CD8-positive, alpha-beta T cell (primary cell): ENCODE measurements at regions of chr21 and their contacts with region 1.

Region 1: DNA sequence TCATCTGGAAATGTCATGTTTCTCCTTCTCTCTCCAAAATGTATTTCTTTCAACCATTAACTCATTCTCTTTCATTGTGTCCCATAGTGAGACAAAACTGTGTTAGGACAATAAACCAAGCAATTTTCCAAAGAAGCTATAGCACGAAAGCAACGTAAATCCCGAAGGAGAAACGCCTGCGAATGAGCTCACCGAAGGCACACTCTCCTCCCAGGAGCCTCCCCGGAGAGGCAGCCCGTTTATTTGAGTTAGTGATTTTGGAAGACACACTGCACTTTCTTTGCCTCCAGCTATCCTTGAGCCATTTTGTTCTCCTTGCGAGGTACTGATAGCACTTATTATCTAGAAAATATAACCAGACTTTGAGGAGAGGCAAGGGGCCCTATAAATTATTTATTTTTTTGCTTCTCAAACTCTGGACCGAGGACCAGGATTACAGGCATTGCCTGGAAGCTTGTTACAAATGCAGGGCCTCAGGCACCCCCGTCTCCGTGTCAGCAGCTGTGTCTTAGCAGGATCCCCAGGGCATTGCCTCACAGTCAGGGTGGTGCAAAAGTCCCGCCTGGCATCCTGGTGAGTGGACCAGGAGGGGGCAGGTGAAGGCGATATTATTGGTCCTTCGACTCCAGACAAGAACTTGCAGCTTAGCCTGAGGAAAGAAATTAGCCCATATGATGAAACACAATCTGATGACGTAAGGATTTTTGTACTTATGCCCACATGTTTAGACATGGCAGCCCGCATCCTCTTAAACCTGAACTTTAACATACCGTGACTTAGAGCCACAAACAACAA is 41.0 kb downstream of the RSPH1 start:
- DNase-seq: no peak
- ATAC-seq: no peak
- H3K4me3 ChIP-seq: no peak overlapping the region
- H3K4me3 Mint-ChIP-seq: no peak overlapping the region
- H3K27ac ChIP-seq: no peak overlapping the region
- H3K27ac Mint-ChIP-seq: no peak overlapping the region
- H3K4me1 ChIP-seq: peaks cover 20% of the 10 kb centered on the region
- H3K4me1 Mint-ChIP-seq: peaks cover 35% of the 10 kb centered on the region
- H3K27me3 ChIP-seq: no peaks in the 10 kb centered on the region
- H3K27me3 Mint-ChIP-seq: no peaks in the 10 kb centered on the region
- CTCF ChIP-seq: no peak

Region 2: GRCh38 chr21:42047821-42048613 is 407.0 kb before region 1 on chr21:
- CTCF ChIA-PET with region 1: no interaction called
- POLR2A ChIA-PET with region 1: no interaction called
- intact Hi-C with region 1: no loop called
- DNase-seq: no peak
- ATAC-seq: no peak
- H3K4me3 ChIP-seq: no peak overlapping the region
- H3K4me3 Mint-ChIP-seq: no peak overlapping the region
- H3K27ac ChIP-seq: no peak overlapping the region
- H3K27ac Mint-ChIP-seq: no peak overlapping the region
- H3K4me1 ChIP-seq: peaks cover 4% of the 10 kb centered on the region
- H3K4me1 Mint-ChIP-seq: peaks cover 9% of the 10 kb centered on the region
- H3K27me3 ChIP-seq: no peaks in the 10 kb centered on the region
- H3K27me3 Mint-ChIP-seq: no peaks in the 10 kb centered on the region
- CTCF ChIP-seq: no peak

Region 3: GRCh38 chr21:42440187-42440792 is 14.7 kb before region 1 on chr21:
- CTCF ChIA-PET with region 1: no interaction called
- POLR2A ChIA-PET with region 1: no interaction called
- intact Hi-C with region 1: no loop called
- DNase-seq: peak in 1 of 9 experiments; percentile 31
- ATAC-seq: no peak
- H3K4me3 ChIP-seq: no peak overlapping the region
- H3K4me3 Mint-ChIP-seq: no peak overlapping the region
- H3K27ac ChIP-seq: peak overlapping the region in 1 of 2 experiments; percentile 51
- H3K27ac Mint-ChIP-seq: peak overlapping the region; percentile 84
- H3K4me1 ChIP-seq: peaks cover 26% of the 10 kb centered on the region
- H3K4me1 Mint-ChIP-seq: peaks cover 47% of the 10 kb centered on the region
- H3K27me3 ChIP-seq: peaks cover 0 to 4% of the 10 kb centered on the region in 2 experiments
- H3K27me3 Mint-ChIP-seq: no peaks in the 10 kb centered on the region
- CTCF ChIP-seq: no peak

Region 4: DNA sequence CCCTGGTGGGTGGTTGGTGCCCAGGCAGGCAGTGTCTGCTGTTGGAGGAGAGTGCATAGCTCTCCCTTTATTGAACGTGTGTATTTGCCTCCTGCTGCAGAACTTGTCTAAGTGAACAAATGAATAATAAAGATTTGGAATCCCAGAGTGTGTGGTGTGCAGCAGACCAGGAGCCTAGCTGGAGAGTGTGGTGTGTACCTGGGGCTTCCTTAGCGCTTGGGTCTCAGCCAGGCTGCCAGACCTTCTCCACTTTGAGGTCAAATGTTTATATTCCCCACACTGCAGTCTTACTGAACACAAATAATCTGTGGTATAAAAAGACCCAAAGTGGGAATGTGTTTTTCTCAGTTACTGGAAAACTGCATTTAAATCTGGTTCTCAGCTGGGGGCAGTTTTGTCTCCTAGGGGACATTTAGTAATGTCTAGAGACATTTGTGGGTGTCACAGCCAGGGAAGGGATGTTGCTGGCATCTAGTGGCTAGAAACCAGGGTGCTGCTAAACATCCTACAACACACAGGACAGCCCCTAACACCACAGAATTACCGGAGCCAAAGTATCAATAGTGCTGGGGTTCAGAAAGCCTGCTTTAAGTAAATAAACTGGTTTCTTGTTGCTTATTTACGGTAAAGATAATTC is 82.2 kb after region 1 on chr21:
- CTCF ChIA-PET with region 1: interaction called, 5 read pairs
- POLR2A ChIA-PET with region 1: interaction called, 3 read pairs
- intact Hi-C with region 1: loop called in 1 of 2 experiments (anchors 5 kb)
- DNase-seq: peak in 2 of 9 experiments; percentile 43 to 53
- ATAC-seq: peak; percentile 66
- H3K4me3 ChIP-seq: no peak overlapping the region
- H3K4me3 Mint-ChIP-seq: no peak overlapping the region
- H3K27ac ChIP-seq: no peak overlapping the region
- H3K27ac Mint-ChIP-seq: no peak overlapping the region
- H3K4me1 ChIP-seq: peaks cover 6% of the 10 kb centered on the region
- H3K4me1 Mint-ChIP-seq: peaks cover 22% of the 10 kb centered on the region
- H3K27me3 ChIP-seq: no peaks in the 10 kb centered on the region
- H3K27me3 Mint-ChIP-seq: no peaks in the 10 kb centered on the region
- CTCF ChIP-seq: no peak